Activated B cell treated with CpG ODN at 0.5 μM for 24 hours (primary cell): ENCODE measurements at regions of chr1 and their contacts with region 1.

Region 1: DNA sequence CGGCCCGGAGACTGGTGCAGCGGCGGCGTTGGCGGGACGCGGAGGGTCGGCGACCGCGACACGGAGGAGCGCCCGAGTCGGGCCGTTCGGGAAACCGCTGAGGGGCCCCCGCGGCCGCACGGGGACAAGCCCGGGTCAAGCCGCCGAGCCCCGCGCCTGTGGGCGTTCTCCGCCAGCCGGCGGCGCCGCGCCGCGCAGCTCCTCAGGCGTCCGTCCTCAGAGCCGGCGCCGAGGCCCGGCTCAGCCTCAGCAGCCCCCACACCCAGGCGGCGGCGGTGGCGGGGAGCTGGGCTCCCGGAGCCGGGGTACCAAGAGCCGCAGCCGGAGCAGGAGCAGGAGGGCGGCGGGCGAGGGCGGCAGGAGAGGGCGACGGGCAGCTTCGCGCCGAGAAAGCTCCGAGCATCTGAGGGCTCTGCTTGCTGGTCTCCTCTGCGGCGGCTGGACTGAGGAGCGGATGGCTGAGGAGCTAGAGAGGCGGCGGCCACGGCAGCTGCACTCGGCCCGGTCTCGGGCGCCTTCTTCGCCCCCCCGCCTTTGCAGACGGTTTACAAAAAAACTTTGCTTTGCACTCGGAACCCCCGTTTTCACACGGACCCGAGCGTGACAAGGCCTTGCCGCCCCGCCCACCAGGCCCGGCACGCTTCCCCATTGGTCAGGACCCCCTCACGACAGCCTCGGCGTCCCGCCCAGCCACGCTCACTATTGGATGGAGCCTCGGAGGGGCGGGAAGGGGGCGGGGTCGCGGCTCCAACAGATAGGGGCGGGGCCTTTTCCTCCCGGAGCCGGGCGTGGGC is at the start of gene SLC30A1:
- DNase-seq: peak; percentile 99
- ATAC-seq: peak; percentile 90
- H3K4me3 Mint-ChIP-seq: peak within 1 kb of the TSS; percentile 94
- H3K27ac Mint-ChIP-seq: peak within 1 kb of the TSS; percentile 89
- H3K4me1 Mint-ChIP-seq: peaks cover 28% of the 10 kb centered on the region
- H3K27me3 Mint-ChIP-seq: no peaks in the 10 kb centered on the region
- CTCF ChIP-seq: no peak
- total RNA-seq, gene SLC30A1: 14.2 and 15.6 TPM in 2 replicates

Region 2: DNA sequence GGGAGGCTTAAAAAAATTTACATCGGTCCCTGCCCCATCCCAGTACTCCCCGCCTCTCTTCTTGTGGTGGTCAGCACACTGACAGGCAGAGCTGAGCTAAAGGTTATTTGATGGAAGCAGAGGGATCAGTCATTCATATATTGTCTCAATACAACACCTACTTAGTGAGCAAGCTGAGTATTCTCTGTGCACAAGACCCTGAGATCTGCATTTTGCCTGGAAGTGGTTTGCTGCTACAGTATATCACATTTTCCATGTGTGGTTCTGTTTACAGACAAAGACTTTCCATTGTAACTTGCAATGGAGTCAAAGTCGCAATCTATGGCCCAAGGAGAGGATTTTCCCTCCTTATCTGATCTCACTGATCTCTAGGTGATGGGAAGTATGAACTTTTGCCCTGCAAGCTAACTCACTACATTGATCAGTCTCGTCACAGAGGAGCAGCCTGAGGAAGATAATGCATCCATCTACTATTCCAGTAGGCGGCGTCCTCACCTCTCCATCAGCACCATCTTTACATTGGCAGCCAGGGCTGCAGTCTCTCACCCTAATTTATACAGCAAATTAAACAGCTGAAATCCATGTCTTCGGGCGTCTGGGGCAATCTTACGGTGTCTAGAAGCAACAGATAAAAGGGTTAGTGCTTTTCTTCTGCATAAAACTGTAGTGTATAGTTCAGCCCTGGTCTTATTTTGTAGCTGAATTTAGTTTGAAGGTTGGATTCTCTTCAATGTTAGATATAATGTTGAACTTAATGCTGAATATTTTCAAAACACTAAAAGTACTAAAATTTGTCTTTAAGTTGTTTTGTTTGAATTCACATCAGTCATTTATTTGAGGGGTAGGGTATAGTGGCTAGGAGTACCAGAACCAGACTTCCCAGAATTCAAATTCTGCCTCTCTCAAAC is 255.4 kb before region 1 on chr1:
- CTCF ChIA-PET with region 1: interaction called, 4 read pairs
- POLR2A ChIA-PET with region 1: interaction called, 6 read pairs
- intact Hi-C with region 1: loop called (anchors 2 kb)
- DNase-seq: no peak
- ATAC-seq: peak; percentile 62
- H3K4me3 Mint-ChIP-seq: no peak overlapping the region
- H3K27ac Mint-ChIP-seq: no peak overlapping the region
- H3K4me1 Mint-ChIP-seq: peaks cover 41% of the 10 kb centered on the region
- H3K27me3 Mint-ChIP-seq: no peaks in the 10 kb centered on the region
- CTCF ChIP-seq: peak; percentile 19

Region 3: DNA sequence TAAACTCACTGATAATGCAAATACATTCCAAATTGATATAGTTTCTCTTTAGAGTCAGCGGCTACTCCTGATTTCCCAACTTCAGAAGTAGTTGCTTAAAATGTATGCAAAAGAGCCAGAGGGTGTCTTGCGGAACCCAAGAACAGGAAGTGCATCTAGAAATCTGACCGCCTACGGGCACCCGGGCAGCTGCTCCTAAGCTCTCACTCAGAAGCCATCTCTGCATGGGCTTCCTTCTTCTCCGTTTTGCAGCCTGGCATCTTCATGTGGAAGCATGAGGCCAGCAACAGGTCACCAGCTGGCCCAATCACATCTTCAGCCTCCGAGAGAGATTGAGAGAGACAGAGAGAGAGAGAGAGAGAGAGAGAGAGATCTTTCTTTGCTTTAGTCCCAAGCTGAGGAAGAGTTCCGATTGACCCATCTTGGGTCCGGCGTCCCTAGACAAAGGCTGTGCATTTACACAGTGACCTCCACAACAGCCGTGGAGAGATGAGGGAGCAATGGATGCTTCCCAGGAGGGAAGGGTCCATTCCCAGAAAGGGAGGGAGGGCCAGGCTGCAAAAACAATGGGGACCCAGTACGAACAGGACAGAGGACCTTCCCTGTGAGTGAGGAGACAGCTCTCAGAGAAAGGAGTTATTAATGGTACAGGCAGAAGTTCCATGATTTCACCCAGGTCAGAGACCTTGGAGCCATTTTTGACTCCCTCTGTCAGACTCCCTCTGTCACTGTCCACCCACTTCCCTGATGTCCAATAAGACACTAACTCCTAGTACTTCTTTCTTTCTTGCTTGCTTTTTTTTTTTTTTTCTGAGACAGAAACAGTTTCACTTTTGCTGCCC is 28.3 kb after region 1 on chr1:
- CTCF ChIA-PET with region 1: interaction called, 10 read pairs
- POLR2A ChIA-PET with region 1: interaction called, 35 read pairs
- intact Hi-C with region 1: loop called (anchors 1 kb)
- DNase-seq: no peak
- ATAC-seq: peak; percentile 92
- H3K4me3 Mint-ChIP-seq: peak overlapping the region; percentile 88
- H3K27ac Mint-ChIP-seq: peak overlapping the region; percentile 91
- H3K4me1 Mint-ChIP-seq: peaks cover 29% of the 10 kb centered on the region
- H3K27me3 Mint-ChIP-seq: no peaks in the 10 kb centered on the region
- CTCF ChIP-seq: no peak

Region 4: DNA sequence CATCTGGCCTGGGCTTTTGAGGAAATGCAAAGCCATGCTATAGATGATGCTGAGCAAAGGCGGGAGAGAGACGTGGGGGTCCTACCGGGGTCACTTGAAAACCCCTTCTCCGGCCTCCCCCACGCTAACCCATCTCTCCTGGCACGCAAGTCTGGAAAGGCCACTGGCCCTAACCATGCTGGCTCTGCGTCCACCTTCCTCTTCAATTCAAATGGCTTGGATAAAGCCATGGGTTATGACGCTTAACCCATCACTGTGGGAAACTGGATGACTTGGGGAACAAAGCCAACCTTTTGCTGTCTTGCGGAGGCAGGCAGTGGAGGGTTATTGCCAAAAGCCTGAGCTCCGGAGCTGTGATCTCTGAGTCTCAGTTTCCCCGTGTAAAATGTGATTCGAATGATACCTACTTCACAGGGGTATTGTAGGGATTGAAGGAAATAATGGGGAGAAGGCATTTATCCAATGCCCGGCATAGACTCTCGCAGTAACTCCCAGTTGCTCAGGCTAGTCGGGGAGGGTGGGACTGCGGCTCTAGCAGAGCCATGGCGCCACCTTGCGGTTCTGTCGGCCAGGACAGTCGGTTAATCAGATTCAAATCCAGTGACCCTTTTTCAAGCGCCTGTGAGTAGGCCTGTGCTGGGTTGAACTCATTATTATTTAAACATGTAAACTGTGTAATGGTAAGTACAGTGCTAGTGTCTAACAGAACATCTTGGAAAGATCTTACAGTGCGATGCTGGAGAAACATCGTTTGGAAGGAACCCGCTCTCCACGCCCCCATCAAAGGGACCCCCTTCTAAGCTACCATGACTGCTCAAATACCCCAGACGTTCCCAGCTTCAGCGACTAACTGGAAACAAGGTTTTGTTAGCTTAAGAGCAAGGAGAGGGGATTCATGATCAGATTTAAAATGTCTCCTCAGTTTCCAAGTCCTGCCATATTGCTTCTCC is 76.3 kb after region 1 on chr1:
- CTCF ChIA-PET with region 1: interaction called, 6 read pairs
- POLR2A ChIA-PET with region 1: no interaction called
- intact Hi-C with region 1: loop called (anchors 1 kb)
- DNase-seq: peak; percentile 70
- ATAC-seq: peak; percentile 91
- H3K4me3 Mint-ChIP-seq: no peak overlapping the region
- H3K27ac Mint-ChIP-seq: no peak overlapping the region
- H3K4me1 Mint-ChIP-seq: peaks cover 4% of the 10 kb centered on the region
- H3K27me3 Mint-ChIP-seq: no peaks in the 10 kb centered on the region
- CTCF ChIP-seq: peak; percentile 33

Region 5: DNA sequence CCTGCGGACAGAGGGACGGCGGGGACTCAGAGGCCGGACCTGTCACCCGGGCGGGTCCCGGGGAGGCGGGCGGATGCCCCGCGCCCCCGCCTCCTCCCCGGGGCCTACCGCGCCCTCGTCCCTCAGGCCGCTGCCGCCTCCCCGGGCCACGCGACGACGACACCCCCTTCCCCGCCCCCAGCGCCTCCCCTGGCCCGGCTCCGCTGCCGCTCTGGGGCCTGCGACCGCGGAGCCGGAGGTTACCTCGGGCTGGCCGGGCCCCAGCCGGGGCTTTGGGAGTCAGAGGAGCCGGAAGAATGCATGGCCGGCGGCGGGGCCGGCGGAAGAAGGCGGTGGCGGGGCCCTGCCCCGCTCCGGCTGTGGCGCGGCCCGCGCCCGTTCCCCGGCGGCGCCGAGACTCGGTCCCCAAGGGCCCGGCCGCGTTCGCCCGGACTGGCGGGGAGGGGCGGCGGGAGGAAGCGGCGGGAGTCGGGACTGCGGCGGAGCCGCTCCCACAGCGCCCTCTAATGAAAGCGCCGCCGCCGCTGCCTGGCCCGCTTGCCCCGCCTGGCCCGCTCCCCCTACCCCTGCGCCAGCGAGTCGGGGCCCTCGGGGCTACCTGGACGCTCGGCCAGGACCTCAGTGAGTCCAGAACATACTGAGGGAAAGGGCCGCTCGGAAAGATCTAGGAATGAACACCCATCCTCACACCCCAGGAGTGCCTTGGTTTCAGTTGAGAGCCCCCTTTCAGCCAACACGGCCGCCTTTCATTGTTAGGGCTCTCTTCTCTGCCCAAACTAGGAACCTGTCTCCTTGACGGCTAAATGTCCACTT is 251.7 kb after region 1 on chr1 and contains the start of gene LPGAT1:
- CTCF ChIA-PET with region 1: no interaction called
- POLR2A ChIA-PET with region 1: no interaction called
- intact Hi-C with region 1: loop called (anchors 2 kb)
- DNase-seq: peak; percentile 78
- ATAC-seq: peak; percentile 86
- H3K4me3 Mint-ChIP-seq: peak within 1 kb of the TSS; percentile 95
- H3K27ac Mint-ChIP-seq: peak within 1 kb of the TSS; percentile 89
- H3K4me1 Mint-ChIP-seq: peaks cover 55% of the 10 kb centered on the region
- H3K27me3 Mint-ChIP-seq: no peaks in the 10 kb centered on the region
- CTCF ChIP-seq: no peak
- total RNA-seq, gene LPGAT1: 39.2 and 43.6 TPM in 2 replicates

Region 6: DNA sequence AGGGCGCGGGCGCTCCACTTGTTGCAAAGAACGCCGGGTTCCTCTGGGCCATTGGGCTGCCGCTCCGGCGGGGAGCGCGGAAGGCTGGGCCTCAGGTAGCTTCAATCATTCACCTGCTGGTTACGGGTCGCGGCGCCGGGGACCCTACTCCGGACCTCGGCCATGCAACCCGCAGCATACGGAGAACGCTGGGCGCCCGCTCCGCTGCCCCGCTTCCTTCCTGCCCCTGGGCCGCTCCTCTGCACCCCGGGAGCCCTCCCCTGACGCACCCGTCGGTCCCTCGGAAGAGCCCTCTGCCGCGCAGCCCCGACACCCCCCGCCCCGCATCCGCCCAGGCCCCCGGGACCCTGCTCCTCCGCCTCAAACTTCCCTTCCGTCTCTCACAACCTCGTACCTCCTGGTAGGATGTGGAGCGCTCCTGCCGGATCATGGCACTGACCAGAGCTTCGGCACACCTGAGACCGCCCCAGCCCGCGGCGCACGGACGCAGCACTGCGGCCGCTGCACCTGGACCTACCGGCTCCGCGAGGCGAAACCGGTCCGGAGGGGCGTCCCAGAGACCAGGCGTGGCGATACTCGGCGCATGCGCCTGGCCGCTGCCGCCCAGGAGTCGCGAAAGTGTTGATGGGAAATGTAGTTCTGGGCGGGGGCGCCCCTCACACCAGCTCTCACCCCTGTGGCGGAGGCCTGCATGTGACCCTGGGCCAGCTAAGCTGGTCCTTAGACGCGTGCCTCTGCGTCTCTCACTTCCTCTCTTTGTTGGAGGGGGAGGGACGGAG is 835.7 kb after region 1 on chr1 and contains the start of gene PACC1:
- CTCF ChIA-PET with region 1: no interaction called
- POLR2A ChIA-PET with region 1: no interaction called
- intact Hi-C with region 1: loop called (anchors 1 kb)
- DNase-seq: peak; percentile 93
- ATAC-seq: peak; percentile 98
- H3K4me3 Mint-ChIP-seq: peak within 1 kb of the TSS; percentile 100
- H3K27ac Mint-ChIP-seq: peak within 1 kb of the TSS; percentile 96
- H3K4me1 Mint-ChIP-seq: peaks cover 43% of the 10 kb centered on the region
- H3K27me3 Mint-ChIP-seq: no peaks in the 10 kb centered on the region
- CTCF ChIP-seq: no peak
- total RNA-seq, gene PACC1: 15.2 and 20.0 TPM in 2 replicates

Region 7: GRCh38 chr1:212857992-212858460 is 1279.2 kb after region 1 on chr1 and contains the start of gene FLVCR1:
- CTCF ChIA-PET with region 1: no interaction called
- POLR2A ChIA-PET with region 1: no interaction called
- intact Hi-C with region 1: loop called (anchors 1 kb)
- DNase-seq: peak; percentile 90
- ATAC-seq: peak; percentile 99
- H3K4me3 Mint-ChIP-seq: peak within 1 kb of the TSS; percentile 99
- H3K27ac Mint-ChIP-seq: peak within 1 kb of the TSS; percentile 93
- H3K4me1 Mint-ChIP-seq: peaks cover 22% of the 10 kb centered on the region
- H3K27me3 Mint-ChIP-seq: no peaks in the 10 kb centered on the region
- CTCF ChIP-seq: no peak
- total RNA-seq, gene FLVCR1: 12.7 and 16.4 TPM in 2 replicates